Gastrocnemius medialis (tissue), 4 donors: ENCODE measurements at regions of chr17 and their contacts with region 1.

Region 1: GRCh38 chr17:17237026-17237799 is at the start of gene FLCN:
- DNase-seq: peak; percentile 80 to 89
- ATAC-seq: peak; percentile 65 to 67
- H3K4me3 ChIP-seq: peak within 1 kb of the TSS; percentile 90 to 100 (median 100)
- H3K27ac ChIP-seq: peak within 1 kb of the TSS; percentile 98 to 100 (median 100)
- H3K4me1 ChIP-seq: peaks cover 24 to 38% of the 10 kb centered on the region in 2 donors
- H3K27me3 ChIP-seq: no peaks in the 10 kb centered on the region
- CTCF ChIP-seq: peak in 2 of 5 experiments; percentile 46 to 54
- POLR2A ChIP-seq: peak; percentile 96
- total RNA-seq, gene FLCN: 31.7 to 62.0 (median 39.2) TPM

Region 2: DNA sequence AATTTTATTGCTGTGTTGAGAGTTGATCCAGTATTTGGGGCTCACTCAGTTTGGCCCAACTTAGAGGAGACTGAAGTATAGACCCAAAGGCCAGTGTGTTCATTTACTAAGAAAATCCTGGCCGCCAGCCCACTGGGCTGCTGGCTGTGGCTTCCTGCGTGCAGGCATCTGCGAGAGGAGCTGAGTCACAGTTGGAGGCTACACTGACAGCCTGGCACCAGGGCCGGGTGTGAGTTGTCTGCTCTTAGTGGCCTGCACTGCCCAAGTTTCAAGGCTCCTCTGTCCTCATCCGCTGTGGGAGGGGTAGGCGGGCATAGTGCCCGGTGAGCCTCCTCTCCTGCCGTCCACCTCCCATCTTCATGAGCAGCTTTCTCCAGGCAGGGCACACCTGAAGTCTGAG is 85.3 kb before region 1 on chr17:
- in situ Hi-C with region 1: no loop called
- intact Hi-C with region 1: loop called (anchors 2 kb)
- DNase-seq: peak; percentile 92 to 97
- ATAC-seq: peak; percentile 88 to 90
- H3K4me3 ChIP-seq: no peak overlapping the region
- H3K27ac ChIP-seq: peak overlapping the region; percentile 89 to 95 (median 92)
- H3K4me1 ChIP-seq: peaks cover 54 to 66% of the 10 kb centered on the region in 2 donors
- H3K27me3 ChIP-seq: no peaks in the 10 kb centered on the region
- CTCF ChIP-seq: no peak
- POLR2A ChIP-seq: no peak

Region 3: GRCh38 chr17:17206124-17206912 is 30.9 kb before region 1 on chr17 and contains the start of gene PLD6:
- in situ Hi-C with region 1: no loop called
- intact Hi-C with region 1: loop called (anchors 1 kb)
- DNase-seq: peak; percentile 65 to 85
- ATAC-seq: peak; percentile 63 to 72
- H3K4me3 ChIP-seq: peak within 1 kb of the TSS; percentile 64 to 83 (median 66)
- H3K27ac ChIP-seq: peak within 1 kb of the TSS; percentile 92 to 97 (median 96)
- H3K4me1 ChIP-seq: peaks cover 12 to 25% of the 10 kb centered on the region in 2 donors
- H3K27me3 ChIP-seq: no peaks in the 10 kb centered on the region
- CTCF ChIP-seq: peak in 1 of 5 experiments; percentile 25
- POLR2A ChIP-seq: peak; percentile 47 to 63
- total RNA-seq, gene PLD6: 1.9 to 5.1 (median 2.7) TPM

Region 4: DNA sequence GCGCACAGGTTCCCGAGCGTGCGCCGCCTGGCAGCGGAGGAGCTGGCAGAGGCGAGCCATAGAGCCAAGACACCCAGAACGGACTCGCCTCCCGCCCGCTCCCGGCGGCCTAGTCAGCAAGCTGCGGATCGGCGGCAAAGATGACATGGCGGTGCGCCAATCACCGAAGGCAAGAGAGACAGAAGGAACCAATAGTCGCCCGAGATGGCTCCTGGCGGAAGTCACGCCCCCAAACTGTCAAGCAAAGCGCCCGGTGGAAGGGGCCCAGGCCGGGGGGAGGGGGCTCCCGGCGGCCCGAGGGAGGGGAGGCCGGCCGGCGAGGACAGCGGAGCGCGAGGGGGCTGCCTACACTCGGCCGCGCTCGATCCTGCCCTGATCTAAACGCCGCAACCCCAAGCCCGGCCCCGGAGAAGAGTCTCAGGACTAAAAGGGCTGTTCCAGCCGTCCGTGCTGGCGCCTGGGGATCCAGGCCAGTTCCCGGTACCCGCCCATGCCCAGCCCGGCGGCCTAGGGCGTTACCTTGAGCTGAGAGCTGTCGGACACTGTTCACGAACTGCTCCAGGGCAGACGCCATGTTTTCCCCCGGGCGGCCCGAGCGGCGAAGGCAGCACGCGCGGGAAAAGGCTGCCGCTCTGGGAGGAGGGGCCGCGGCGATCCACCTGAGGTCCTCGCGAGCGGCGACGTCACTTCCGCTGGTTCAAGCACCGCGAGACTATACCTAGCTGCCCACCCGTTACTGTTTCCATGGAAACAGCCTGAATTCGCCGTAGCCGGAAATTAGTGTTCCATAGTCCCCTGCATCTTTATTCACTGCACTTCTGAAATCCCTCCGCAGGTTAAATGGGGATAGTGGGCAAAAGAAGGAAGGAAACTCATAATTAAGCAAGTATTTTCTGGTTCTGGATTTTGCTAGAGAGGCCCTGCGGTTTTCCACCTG is 43.7 kb after region 1 on chr17 and contains the start of gene COPS3:
- in situ Hi-C with region 1: no loop called
- intact Hi-C with region 1: loop called (anchors 2 kb)
- DNase-seq: peak; percentile 98 to 99
- ATAC-seq: peak; percentile 95
- H3K4me3 ChIP-seq: peak within 1 kb of the TSS; percentile 88 to 99 (median 92)
- H3K27ac ChIP-seq: peak within 1 kb of the TSS; percentile 97 to 100 (median 100)
- H3K4me1 ChIP-seq: peaks cover 39 to 41% of the 10 kb centered on the region in 2 donors
- H3K27me3 ChIP-seq: no peaks in the 10 kb centered on the region
- CTCF ChIP-seq: no peak
- POLR2A ChIP-seq: peak; percentile 90 to 91
- total RNA-seq, gene COPS3: 145 to 249 (median 175) TPM

Region 5: GRCh38 chr17:17591355-17592298 is 354.4 kb after region 1 on chr17 and contains the start of gene PEMT:
- in situ Hi-C with region 1: no loop called
- intact Hi-C with region 1: loop called (anchors 5 kb)
- DNase-seq: peak; percentile 97 to 98
- ATAC-seq: peak; percentile 98
- H3K4me3 ChIP-seq: peak within 1 kb of the TSS; percentile 75 to 95 (median 86)
- H3K27ac ChIP-seq: peak within 1 kb of the TSS; percentile 83 to 94 (median 91)
- H3K4me1 ChIP-seq: peaks cover 19 to 22% of the 10 kb centered on the region in 2 donors
- H3K27me3 ChIP-seq: no peaks in the 10 kb centered on the region
- CTCF ChIP-seq: peak in 1 of 5 experiments; percentile 20
- POLR2A ChIP-seq: peak; percentile 60 to 66
- total RNA-seq, gene PEMT: 32.8 to 48.2 (median 34.2) TPM

Region 6: DNA sequence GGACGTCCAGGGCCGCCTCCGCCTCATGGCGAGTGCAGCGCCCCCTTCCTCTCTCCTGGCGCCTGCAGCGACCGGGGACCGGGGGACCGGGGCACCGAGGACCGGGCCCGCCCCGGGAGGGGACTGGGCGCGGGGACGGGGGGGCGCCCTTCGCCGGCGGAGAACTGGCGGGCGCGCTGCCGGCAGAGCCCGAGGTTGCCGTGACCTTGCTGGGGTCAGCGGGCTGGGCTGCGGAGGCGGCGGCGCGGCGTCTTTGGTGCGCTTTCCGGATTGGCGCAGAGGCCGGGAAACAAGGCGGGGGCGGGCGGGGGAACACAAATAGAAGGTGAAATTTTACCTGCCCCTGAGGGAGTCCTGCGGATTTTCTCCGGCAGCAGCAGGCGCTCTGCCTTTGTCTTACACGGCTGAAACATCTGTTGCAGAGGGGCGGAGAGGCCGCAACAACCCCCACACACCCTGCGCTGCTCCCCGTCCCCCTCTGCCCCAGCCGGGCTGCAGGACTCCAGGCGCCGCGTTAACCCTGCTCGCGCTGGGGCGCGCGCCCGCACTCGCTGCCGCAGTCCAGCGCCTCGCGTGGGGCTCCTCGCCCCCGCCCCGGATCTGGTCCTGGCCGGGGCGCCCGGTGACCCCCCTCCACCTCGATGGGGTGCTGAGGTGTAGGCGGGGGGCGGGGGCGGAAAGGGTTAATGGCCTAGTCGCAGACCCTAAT is 546.1 kb after region 1 on chr17:
- in situ Hi-C with region 1: no loop called
- intact Hi-C with region 1: loop called (anchors 5 kb)
- DNase-seq: peak; percentile 74 to 90
- ATAC-seq: peak; percentile 61 to 67
- H3K4me3 ChIP-seq: peak overlapping the region; percentile 56 to 94 (median 62)
- H3K27ac ChIP-seq: peak overlapping the region; percentile 88 to 98 (median 93)
- H3K4me1 ChIP-seq: peaks cover 45 to 53% of the 10 kb centered on the region in 2 donors
- H3K27me3 ChIP-seq: no peaks in the 10 kb centered on the region
- CTCF ChIP-seq: peak in 2 of 5 experiments; percentile 11 to 20
- POLR2A ChIP-seq: peak; percentile 65 to 78